Breast epithelium (tissue), 4 donors: ENCODE measurements at regions of chr11 and their contacts with region 1.

Region 1: GRCh38 chr11:24747275-24748251 is 250.7 kb downstream of the LUZP2 start:
- DNase-seq: no peak
- H3K4me3 ChIP-seq: no peak overlapping the region
- H3K27ac ChIP-seq: no peak overlapping the region
- H3K4me1 ChIP-seq: no peaks in the 10 kb centered on the region
- H3K27me3 ChIP-seq: no peaks in the 10 kb centered on the region
- CTCF ChIP-seq: no peak
- POLR2A ChIP-seq: no peak

Region 2: GRCh38 chr11:24773309-24773708 is 25.7 kb after region 1 on chr11:
- intact Hi-C with region 1: no loop called
- DNase-seq: no peak
- H3K4me3 ChIP-seq: no peak overlapping the region
- H3K27ac ChIP-seq: no peak overlapping the region
- H3K4me1 ChIP-seq: no peaks in the 10 kb centered on the region
- H3K27me3 ChIP-seq: no peaks in the 10 kb centered on the region
- CTCF ChIP-seq: no peak
- POLR2A ChIP-seq: no peak

Region 3: GRCh38 chr11:25876456-25876965 is 1128.9 kb after region 1 on chr11:
- intact Hi-C with region 1: loop called (anchors 5 kb)
- DNase-seq: no peak
- H3K4me3 ChIP-seq: no peak overlapping the region
- H3K27ac ChIP-seq: no peak overlapping the region
- H3K4me1 ChIP-seq: no peaks in the 10 kb centered on the region
- H3K27me3 ChIP-seq: no peaks in the 10 kb centered on the region
- CTCF ChIP-seq: no peak
- POLR2A ChIP-seq: no peak